ENCODE measurements at regions of chr14 and their contacts with region 1.

Region 1: GRCh38 chr14:51202914-51203665 is 37.0 kb upstream of the TMX1 start:
- DNase-seq: peak; percentile 81
- ATAC-seq: peak; percentile 86
- H3K4me3 ChIP-seq: no peak overlapping the region
- H3K27ac ChIP-seq: peak overlapping the region; percentile 7; the same call in 1 of the 2 replicates
- H3K4me1 ChIP-seq: peaks cover 20% of the 10 kb centered on the region
- H3K27me3 ChIP-seq: no peaks in the 10 kb centered on the region; a peak in 1 of 4 replicates
- CTCF ChIP-seq: peak; percentile 27 to 38 (median 35); a peak in 4 of 6 replicates
- EP300 ChIP-seq: no peak
- POLR2A ChIP-seq: no peak
- RAD21 ChIP-seq: peak; percentile 30; the same call in 1 of the 2 replicates

Region 2: GRCh38 chr14:51157012-51157411 is 46.1 kb before region 1 on chr14:
- CTCF ChIA-PET with region 1: interaction called, 6 read pairs
- POLR2A ChIA-PET with region 1: no interaction called
- RAD21 ChIA-PET with region 1: interaction called, 7 read pairs
- SMC1A ChIA-PET with region 1: interaction called, 8 read pairs
- in situ Hi-C with region 1: no loop called
- intact Hi-C with region 1: loop called (anchors 1 kb)
- DNase-seq: no peak
- ATAC-seq: peak; percentile 92
- H3K4me3 ChIP-seq: no peak overlapping the region
- H3K27ac ChIP-seq: no peak overlapping the region
- H3K4me1 ChIP-seq: peaks cover 7% of the 10 kb centered on the region
- H3K27me3 ChIP-seq: no peaks in the 10 kb centered on the region
- CTCF ChIP-seq: peak; percentile 57 to 64 (median 63)
- EP300 ChIP-seq: no peak
- POLR2A ChIP-seq: no peak
- RAD21 ChIP-seq: peak; percentile 74

Region 3: GRCh38 chr14:51185754-51186153 is 17.3 kb before region 1 on chr14:
- CTCF ChIA-PET with region 1: interaction called, 10 read pairs
- POLR2A ChIA-PET with region 1: interaction called, 3 read pairs
- RAD21 ChIA-PET with region 1: interaction called, 3 read pairs
- SMC1A ChIA-PET with region 1: interaction called, 3 read pairs
- in situ Hi-C with region 1: no loop called
- intact Hi-C with region 1: loop called (anchors 2 kb)
- DNase-seq: peak; percentile 64
- ATAC-seq: peak; percentile 91
- H3K4me3 ChIP-seq: peak overlapping the region; percentile 31; the same call in 1 of the 2 replicates
- H3K27ac ChIP-seq: no peak overlapping the region
- H3K4me1 ChIP-seq: peaks cover 22% of the 10 kb centered on the region
- H3K27me3 ChIP-seq: no peaks in the 10 kb centered on the region
- CTCF ChIP-seq: no peak
- EP300 ChIP-seq: no peak
- POLR2A ChIP-seq: no peak
- RAD21 ChIP-seq: no peak

Region 4: DNA sequence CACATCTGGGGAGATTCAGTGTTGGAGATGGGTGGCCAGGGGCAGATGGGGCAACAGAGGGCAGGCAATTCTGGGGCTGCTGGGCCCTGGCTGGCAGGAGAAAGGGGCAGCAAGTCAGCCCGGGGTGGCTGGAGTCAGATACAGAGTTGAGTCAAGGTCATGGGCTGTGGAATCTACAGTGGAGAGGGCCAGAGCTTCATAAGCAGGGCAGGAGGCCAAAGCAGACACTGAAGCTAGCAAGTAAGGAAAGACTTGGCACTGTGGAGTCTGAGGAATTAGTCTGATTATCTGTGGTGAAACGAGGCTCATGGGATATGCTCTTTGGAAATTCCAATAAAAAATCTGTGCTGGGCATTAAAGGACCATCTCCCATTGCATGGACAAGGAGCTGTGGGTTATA is 132.4 kb after region 1 on chr14:
- CTCF ChIA-PET with region 1: no interaction called
- POLR2A ChIA-PET with region 1: no interaction called
- RAD21 ChIA-PET with region 1: no interaction called
- SMC1A ChIA-PET with region 1: no interaction called
- in situ Hi-C with region 1: no loop called
- intact Hi-C with region 1: no loop called
- DNase-seq: no peak
- ATAC-seq: no peak
- H3K4me3 ChIP-seq: no peak overlapping the region
- H3K27ac ChIP-seq: no peak overlapping the region
- H3K4me1 ChIP-seq: no peaks in the 10 kb centered on the region
- H3K27me3 ChIP-seq: no peaks in the 10 kb centered on the region
- CTCF ChIP-seq: no peak
- EP300 ChIP-seq: no peak
- POLR2A ChIP-seq: no peak
- RAD21 ChIP-seq: no peak